ENCODE measurements at regions of chr7 and their contacts with region 1.

Region 1: DNA sequence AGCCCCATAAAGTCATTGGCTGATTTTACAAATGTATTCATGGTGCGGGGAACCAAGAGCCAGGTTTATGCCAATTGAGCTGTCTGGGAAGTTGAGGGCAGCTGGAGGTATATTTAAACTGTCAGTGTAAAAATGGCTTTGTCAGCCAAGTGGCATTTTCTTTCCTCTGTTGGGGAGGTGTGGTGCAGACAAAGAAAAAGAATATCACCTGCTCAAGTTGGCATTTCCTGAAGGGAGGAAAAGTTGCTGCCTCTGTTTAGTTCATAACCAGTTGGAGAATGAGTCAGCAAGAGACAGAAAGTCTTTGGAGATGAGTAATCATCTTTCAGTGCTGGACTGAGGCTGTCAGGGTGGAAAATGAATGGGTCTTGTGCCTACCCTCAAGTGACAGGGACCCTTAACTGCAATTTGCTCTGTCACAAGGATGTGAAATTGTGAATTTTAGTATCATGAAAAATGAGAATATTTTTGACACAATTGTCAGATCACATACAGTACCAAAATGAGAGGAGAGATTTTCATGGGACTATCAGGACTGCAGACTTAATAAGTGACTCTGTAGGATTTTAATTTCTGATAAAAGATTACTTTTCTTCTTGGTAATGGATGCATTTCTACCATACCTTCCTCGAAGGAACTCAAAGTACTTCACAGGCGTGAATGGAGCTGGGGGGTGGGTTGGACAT is 137.3 kb downstream of the ANLN start:
- DNase-seq: peak; percentile 57
- H3K4me3 Mint-ChIP-seq: no peak overlapping the region
- H3K27ac Mint-ChIP-seq: peak overlapping the region; percentile 45
- H3K4me1 Mint-ChIP-seq: peaks cover 17% of the 10 kb centered on the region
- H3K27me3 Mint-ChIP-seq: peaks cover 4% of the 10 kb centered on the region

Region 2: GRCh38 chr7:36514289-36515243 is 12.4 kb before region 1 on chr7:
- intact Hi-C with region 1: no loop called
- DNase-seq: no peak
- H3K4me3 Mint-ChIP-seq: no peak overlapping the region
- H3K27ac Mint-ChIP-seq: no peak overlapping the region
- H3K4me1 Mint-ChIP-seq: peaks cover 11% of the 10 kb centered on the region
- H3K27me3 Mint-ChIP-seq: no peaks in the 10 kb centered on the region

Region 3: GRCh38 chr7:36670585-36671431 is 143.8 kb after region 1 on chr7:
- intact Hi-C with region 1: loop called (anchors 1 kb)
- DNase-seq: peak; percentile 91
- H3K4me3 Mint-ChIP-seq: peak overlapping the region; percentile 4
- H3K27ac Mint-ChIP-seq: peak overlapping the region; percentile 42
- H3K4me1 Mint-ChIP-seq: peaks cover 34% of the 10 kb centered on the region
- H3K27me3 Mint-ChIP-seq: no peaks in the 10 kb centered on the region

Measured in activated CD4-positive, alpha-beta T cell treated with anti-CD3 and anti-CD28 coated beads, Interleukin-2, amount 10 ng/mL, durations not matched to agents 24 days and 14 days (primary cell).